ENCODE measurements at regions of chr14 and their contacts with region 1.

Region 1: GRCh38 chr14:67816326-67817002 is at the start of gene ZFYVE26:
- DNase-seq: peak; percentile 88
- H3K4me3 Mint-ChIP-seq: peak within 1 kb of the TSS; percentile 90
- H3K27ac Mint-ChIP-seq: peak within 1 kb of the TSS; percentile 90
- H3K4me1 Mint-ChIP-seq: peaks cover 49% of the 10 kb centered on the region
- H3K27me3 Mint-ChIP-seq: no peaks in the 10 kb centered on the region
- total RNA-seq, gene ZFYVE26: 15.2 and 20.0 TPM in 2 replicates

Region 2: GRCh38 chr14:66507722-66508546 is 1308.5 kb before region 1 on chr14 and contains the start of gene GPHN:
- intact Hi-C with region 1: loop called (anchors 5 kb)
- DNase-seq: peak; percentile 90
- H3K4me3 Mint-ChIP-seq: peak within 1 kb of the TSS; percentile 93
- H3K27ac Mint-ChIP-seq: peak within 1 kb of the TSS; percentile 96
- H3K4me1 Mint-ChIP-seq: peaks cover 36% of the 10 kb centered on the region
- H3K27me3 Mint-ChIP-seq: peaks cover 22% of the 10 kb centered on the region
- total RNA-seq, gene GPHN: 38.5 and 43.5 TPM in 2 replicates

Region 3: DNA sequence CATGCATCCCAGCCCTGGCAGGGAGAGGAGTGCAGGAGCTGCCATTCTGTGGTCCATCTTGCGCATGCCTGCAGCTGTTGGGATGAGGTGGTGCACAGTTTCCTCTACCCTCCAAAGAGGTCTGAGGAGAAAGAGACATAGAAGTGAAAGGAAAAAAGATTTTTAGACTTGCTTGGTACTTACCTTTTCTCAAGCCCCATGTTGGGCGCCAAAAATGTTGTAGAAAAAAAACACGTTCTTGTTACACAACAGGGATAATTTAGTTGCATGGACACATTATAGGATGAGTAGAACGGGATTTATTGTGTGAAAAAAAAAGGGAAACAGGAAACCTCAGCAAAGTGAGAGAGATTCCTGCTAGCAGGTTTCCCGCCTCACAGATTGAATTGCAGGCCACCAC is 871.6 kb before region 1 on chr14:
- intact Hi-C with region 1: no loop called
- DNase-seq: no peak
- H3K4me3 Mint-ChIP-seq: no peak overlapping the region
- H3K27ac Mint-ChIP-seq: no peak overlapping the region
- H3K4me1 Mint-ChIP-seq: no peaks in the 10 kb centered on the region
- H3K27me3 Mint-ChIP-seq: no peaks in the 10 kb centered on the region

Region 4: GRCh38 chr14:67359775-67360648 is 456.5 kb before region 1 on chr14 and contains the starts of genes ATP6V1D and EIF2S1:
- intact Hi-C with region 1: loop called (anchors 1 kb)
- DNase-seq: peak; percentile 100
- H3K4me3 Mint-ChIP-seq: peak within 1 kb of the TSS; percentile 92
- H3K27ac Mint-ChIP-seq: peak within 1 kb of the TSS; percentile 97
- H3K4me1 Mint-ChIP-seq: peaks cover 81% of the 10 kb centered on the region
- H3K27me3 Mint-ChIP-seq: no peaks in the 10 kb centered on the region
- total RNA-seq, gene ATP6V1D: 29.1 and 30.8 TPM in 2 replicates
- total RNA-seq, gene EIF2S1: 234 and 245 TPM in 2 replicates

Region 5: GRCh38 chr14:67619446-67620216 is 196.8 kb before region 1 on chr14 and contains the start of gene ARG2:
- intact Hi-C with region 1: loop called (anchors 1 kb)
- DNase-seq: peak; percentile 94
- H3K4me3 Mint-ChIP-seq: peak within 1 kb of the TSS; percentile 86
- H3K27ac Mint-ChIP-seq: peak within 1 kb of the TSS; percentile 71
- H3K4me1 Mint-ChIP-seq: peaks cover 39% of the 10 kb centered on the region
- H3K27me3 Mint-ChIP-seq: peaks cover 14% of the 10 kb centered on the region
- total RNA-seq, gene ARG2: 5.2 and 7.1 TPM in 2 replicates

Region 6: GRCh38 chr14:67695394-67695949 is 121.0 kb before region 1 on chr14 and contains the start of gene RDH11:
- intact Hi-C with region 1: loop called (anchors 1 kb)
- DNase-seq: peak; percentile 80
- H3K4me3 Mint-ChIP-seq: peak within 1 kb of the TSS; percentile 95
- H3K27ac Mint-ChIP-seq: peak within 1 kb of the TSS; percentile 98
- H3K4me1 Mint-ChIP-seq: peaks cover 42% of the 10 kb centered on the region
- H3K27me3 Mint-ChIP-seq: no peaks in the 10 kb centered on the region
- total RNA-seq, gene RDH11: 63.2 and 66.1 TPM in 2 replicates

Region 7: DNA sequence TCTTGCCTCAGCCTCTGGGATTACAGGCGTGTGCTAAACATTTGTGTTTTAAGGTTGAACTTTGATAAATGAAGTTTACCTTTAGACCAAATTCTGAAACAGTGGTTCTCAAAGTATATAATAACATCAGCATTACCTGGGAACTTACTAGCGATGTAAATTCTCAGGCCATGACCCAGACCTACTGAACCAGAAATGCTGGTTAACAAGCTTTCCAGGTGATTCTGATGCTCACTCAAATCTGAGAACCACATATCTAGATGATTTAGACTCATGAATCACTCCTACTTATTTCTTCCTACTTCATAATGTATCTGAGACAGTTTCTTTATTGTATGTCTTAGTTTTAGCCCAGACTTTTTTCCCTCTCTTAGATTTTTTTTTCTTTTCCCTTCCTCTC is 46.8 kb after region 1 on chr14:
- intact Hi-C with region 1: no loop called
- DNase-seq: no peak
- H3K4me3 Mint-ChIP-seq: no peak overlapping the region
- H3K27ac Mint-ChIP-seq: no peak overlapping the region
- H3K4me1 Mint-ChIP-seq: no peaks in the 10 kb centered on the region
- H3K27me3 Mint-ChIP-seq: no peaks in the 10 kb centered on the region

Region 8: GRCh38 chr14:68979021-68979782 is 1162.7 kb after region 1 on chr14 and contains the start of gene ACTN1:
- intact Hi-C with region 1: loop called (anchors 5 kb)
- DNase-seq: peak; percentile 22
- H3K4me3 Mint-ChIP-seq: peak within 1 kb of the TSS; percentile 85
- H3K27ac Mint-ChIP-seq: peak within 1 kb of the TSS; percentile 68
- H3K4me1 Mint-ChIP-seq: peaks cover 22% of the 10 kb centered on the region
- H3K27me3 Mint-ChIP-seq: peaks cover 32% of the 10 kb centered on the region
- total RNA-seq, gene ACTN1: 27.4 and 27.9 TPM in 2 replicates

Region 9: DNA sequence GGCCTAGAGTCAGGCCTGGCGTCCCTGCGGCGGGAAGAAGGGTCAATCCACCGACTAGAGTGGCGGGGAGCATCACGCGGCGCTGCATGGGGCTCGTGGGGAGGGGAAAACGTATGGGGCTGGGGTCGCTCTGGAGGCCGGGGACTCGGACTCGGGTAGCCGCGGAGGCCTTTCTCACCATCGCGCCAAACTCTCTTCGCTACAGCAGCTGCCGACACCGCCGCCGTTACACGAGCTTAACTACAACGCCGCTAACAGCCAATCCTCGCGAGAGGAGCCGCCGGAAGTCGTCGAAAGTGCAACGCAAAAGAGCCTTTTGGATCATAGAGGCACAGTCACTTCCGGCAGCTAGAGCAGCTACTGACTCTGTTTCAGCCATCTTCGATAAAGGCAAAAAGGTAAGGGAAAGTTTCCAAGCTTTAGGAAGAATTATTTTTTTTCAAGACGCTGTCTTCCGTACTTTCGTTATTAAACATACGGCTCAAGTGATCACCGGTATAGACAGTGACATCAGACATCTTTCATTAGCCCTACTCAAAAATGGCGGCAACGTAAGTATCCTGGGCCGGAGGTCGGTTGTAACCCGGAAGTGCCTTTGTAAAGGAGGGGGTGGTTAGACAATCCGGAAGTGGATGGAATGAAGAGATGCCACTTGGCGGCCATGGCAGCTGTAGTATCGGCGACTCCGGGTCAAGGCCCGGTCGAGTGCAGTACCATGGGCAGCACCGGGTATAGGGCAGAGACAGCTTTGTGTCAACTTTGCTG is 1581.8 kb after region 1 on chr14 and contains the starts of genes ERH and SLC39A9:
- intact Hi-C with region 1: loop called (anchors 1 kb)
- DNase-seq: peak; percentile 91
- H3K4me3 Mint-ChIP-seq: peak within 1 kb of the TSS; percentile 96
- H3K27ac Mint-ChIP-seq: peak within 1 kb of the TSS; percentile 98
- H3K4me1 Mint-ChIP-seq: peaks cover 63% of the 10 kb centered on the region
- H3K27me3 Mint-ChIP-seq: no peaks in the 10 kb centered on the region
- total RNA-seq, gene ERH: 400 and 421 TPM in 2 replicates
- total RNA-seq, gene SLC39A9: 51.6 and 53.7 TPM in 2 replicates